ENCODE measurements at regions of chr4 and their contacts with region 1.

Region 1: GRCh38 chr4:54064295-54065111 is at the start of gene CHIC2:
- DNase-seq: peak; percentile 95 to 99 (median 97)
- ATAC-seq: peak; percentile 89
- H3K4me3 ChIP-seq: peak within 1 kb of the TSS; percentile 89
- H3K4me3 Mint-ChIP-seq: peak within 1 kb of the TSS; percentile 97
- H3K27ac ChIP-seq: peak within 1 kb of the TSS; percentile 88 to 99
- H3K27ac Mint-ChIP-seq: peak within 1 kb of the TSS; percentile 90
- H3K4me1 ChIP-seq: peaks cover 8% of the 10 kb centered on the region
- H3K4me1 Mint-ChIP-seq: peaks cover 55% of the 10 kb centered on the region
- H3K27me3 ChIP-seq: no peaks in the 10 kb centered on the region
- H3K27me3 Mint-ChIP-seq: no peaks in the 10 kb centered on the region
- CTCF ChIP-seq: no peak
- total RNA-seq, gene CHIC2: 53.8 to 59.2 TPM

Region 2: GRCh38 chr4:53365486-53366300 is 698.8 kb before region 1 on chr4 and contains the start of gene SCFD2:
- CTCF ChIA-PET with region 1: no interaction called
- POLR2A ChIA-PET with region 1: interaction called, 3 read pairs
- intact Hi-C with region 1: loop called in 1 of 2 experiments (anchors 5 kb)
- DNase-seq: peak; percentile 87 to 98 (median 95)
- ATAC-seq: peak; percentile 95
- H3K4me3 ChIP-seq: peak within 1 kb of the TSS; percentile 72
- H3K4me3 Mint-ChIP-seq: peak within 1 kb of the TSS; percentile 91
- H3K27ac ChIP-seq: peak within 1 kb of the TSS; percentile 75 to 77
- H3K27ac Mint-ChIP-seq: peak within 1 kb of the TSS; percentile 93
- H3K4me1 ChIP-seq: peaks cover 30% of the 10 kb centered on the region
- H3K4me1 Mint-ChIP-seq: peaks cover 55% of the 10 kb centered on the region
- H3K27me3 ChIP-seq: peaks cover 0 to 6% of the 10 kb centered on the region in 2 experiments
- H3K27me3 Mint-ChIP-seq: peaks cover 11% of the 10 kb centered on the region
- CTCF ChIP-seq: no peak
- total RNA-seq, gene SCFD2: 15.4 to 17.6 TPM

Region 3: GRCh38 chr4:53377319-53378170 is 687.0 kb before region 1 on chr4 and contains the start of gene FIP1L1:
- CTCF ChIA-PET with region 1: no interaction called
- POLR2A ChIA-PET with region 1: no interaction called
- intact Hi-C with region 1: loop called in 1 of 2 experiments (anchors 5 kb)
- DNase-seq: peak; percentile 90 to 99 (median 96)
- ATAC-seq: peak; percentile 95
- H3K4me3 ChIP-seq: peak within 1 kb of the TSS; percentile 92
- H3K4me3 Mint-ChIP-seq: peak within 1 kb of the TSS; percentile 99
- H3K27ac ChIP-seq: peak within 1 kb of the TSS; percentile 89 to 95
- H3K27ac Mint-ChIP-seq: peak within 1 kb of the TSS; percentile 97
- H3K4me1 ChIP-seq: peaks cover 6% of the 10 kb centered on the region
- H3K4me1 Mint-ChIP-seq: peaks cover 53% of the 10 kb centered on the region
- H3K27me3 ChIP-seq: no peaks in the 10 kb centered on the region
- H3K27me3 Mint-ChIP-seq: peaks cover 5% of the 10 kb centered on the region
- CTCF ChIP-seq: no peak
- total RNA-seq, gene FIP1L1: 50.9 to 53.1 TPM

Region 4: GRCh38 chr4:53734584-53735353 is 329.7 kb before region 1 on chr4:
- CTCF ChIA-PET with region 1: no interaction called
- POLR2A ChIA-PET with region 1: no interaction called
- intact Hi-C with region 1: no loop called
- DNase-seq: peak in 2 of 14 experiments; percentile 9 to 16
- ATAC-seq: no peak
- H3K4me3 ChIP-seq: no peak overlapping the region
- H3K4me3 Mint-ChIP-seq: no peak overlapping the region
- H3K27ac ChIP-seq: no peak overlapping the region
- H3K27ac Mint-ChIP-seq: no peak overlapping the region
- H3K4me1 ChIP-seq: no peaks in the 10 kb centered on the region
- H3K4me1 Mint-ChIP-seq: no peaks in the 10 kb centered on the region
- H3K27me3 ChIP-seq: no peaks in the 10 kb centered on the region
- H3K27me3 Mint-ChIP-seq: peaks cover 6% of the 10 kb centered on the region
- CTCF ChIP-seq: no peak

Region 5: DNA sequence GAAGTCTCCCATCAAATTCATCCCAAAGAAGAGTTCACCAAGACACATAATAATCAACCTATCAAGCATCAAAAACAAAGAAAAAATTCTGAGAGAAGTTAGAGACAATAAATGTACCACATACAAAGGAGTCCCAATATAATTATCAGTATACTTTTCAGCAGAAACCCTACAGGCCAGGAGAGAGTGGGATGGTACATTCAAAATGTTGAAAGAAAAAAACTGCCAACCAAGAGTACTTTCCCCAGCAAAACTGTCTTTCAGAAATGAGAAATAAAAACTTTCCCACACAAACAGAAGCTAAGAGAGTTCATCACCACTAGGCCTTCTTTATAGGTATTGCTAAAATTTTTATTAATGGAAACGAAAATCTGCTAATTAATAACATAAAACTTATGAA is 308.8 kb before region 1 on chr4:
- CTCF ChIA-PET with region 1: no interaction called
- POLR2A ChIA-PET with region 1: no interaction called
- intact Hi-C with region 1: no loop called
- DNase-seq: no peak
- ATAC-seq: no peak
- H3K4me3 ChIP-seq: no peak overlapping the region
- H3K4me3 Mint-ChIP-seq: no peak overlapping the region
- H3K27ac ChIP-seq: no peak overlapping the region
- H3K27ac Mint-ChIP-seq: no peak overlapping the region
- H3K4me1 ChIP-seq: no peaks in the 10 kb centered on the region
- H3K4me1 Mint-ChIP-seq: no peaks in the 10 kb centered on the region
- H3K27me3 ChIP-seq: no peaks in the 10 kb centered on the region
- H3K27me3 Mint-ChIP-seq: peaks cover 5% of the 10 kb centered on the region
- CTCF ChIP-seq: no peak

Region 6: DNA sequence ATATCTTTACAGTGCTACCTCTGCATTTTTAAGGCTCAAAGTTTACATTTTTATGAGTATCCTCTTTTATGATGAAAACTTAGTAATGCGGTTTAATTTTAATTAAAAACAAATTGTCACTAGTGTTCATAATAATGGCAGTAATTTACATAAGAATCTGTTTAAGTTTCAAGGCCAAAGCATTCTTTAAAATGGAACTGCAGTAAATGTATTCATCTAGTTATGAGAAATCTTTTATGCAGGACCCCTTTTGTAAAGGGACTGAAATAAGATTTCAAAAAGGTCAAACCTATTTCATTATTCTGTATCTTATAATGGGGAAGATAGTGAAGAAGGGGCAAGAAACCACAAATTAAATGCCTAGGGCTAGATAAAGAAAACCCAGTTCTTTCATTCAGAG is 37.2 kb before region 1 on chr4:
- CTCF ChIA-PET with region 1: no interaction called
- POLR2A ChIA-PET with region 1: no interaction called
- intact Hi-C with region 1: loop called in 1 of 2 experiments (anchors 5 kb)
- DNase-seq: no peak
- ATAC-seq: no peak
- H3K4me3 ChIP-seq: no peak overlapping the region
- H3K4me3 Mint-ChIP-seq: no peak overlapping the region
- H3K27ac ChIP-seq: no peak overlapping the region
- H3K27ac Mint-ChIP-seq: no peak overlapping the region
- H3K4me1 ChIP-seq: peaks cover 4% of the 10 kb centered on the region
- H3K4me1 Mint-ChIP-seq: peaks cover 35% of the 10 kb centered on the region
- H3K27me3 ChIP-seq: no peaks in the 10 kb centered on the region
- H3K27me3 Mint-ChIP-seq: no peaks in the 10 kb centered on the region
- CTCF ChIP-seq: no peak

Region 7: GRCh38 chr4:54091637-54092404 is 27.3 kb after region 1 on chr4:
- CTCF ChIA-PET with region 1: no interaction called
- POLR2A ChIA-PET with region 1: interaction called, 8 read pairs
- intact Hi-C with region 1: loop called (anchors 1 to 2 kb)
- DNase-seq: peak; percentile 66 to 93 (median 80)
- ATAC-seq: peak; percentile 93
- H3K4me3 ChIP-seq: peak overlapping the region; percentile 63
- H3K4me3 Mint-ChIP-seq: peak overlapping the region; percentile 88
- H3K27ac ChIP-seq: no peak overlapping the region
- H3K27ac Mint-ChIP-seq: no peak overlapping the region
- H3K4me1 ChIP-seq: peaks cover 30% of the 10 kb centered on the region
- H3K4me1 Mint-ChIP-seq: peaks cover 32% of the 10 kb centered on the region
- H3K27me3 ChIP-seq: peaks cover 49 to 53% of the 10 kb centered on the region in 2 experiments
- H3K27me3 Mint-ChIP-seq: peaks cover 62% of the 10 kb centered on the region
- CTCF ChIP-seq: no peak

Region 8: DNA sequence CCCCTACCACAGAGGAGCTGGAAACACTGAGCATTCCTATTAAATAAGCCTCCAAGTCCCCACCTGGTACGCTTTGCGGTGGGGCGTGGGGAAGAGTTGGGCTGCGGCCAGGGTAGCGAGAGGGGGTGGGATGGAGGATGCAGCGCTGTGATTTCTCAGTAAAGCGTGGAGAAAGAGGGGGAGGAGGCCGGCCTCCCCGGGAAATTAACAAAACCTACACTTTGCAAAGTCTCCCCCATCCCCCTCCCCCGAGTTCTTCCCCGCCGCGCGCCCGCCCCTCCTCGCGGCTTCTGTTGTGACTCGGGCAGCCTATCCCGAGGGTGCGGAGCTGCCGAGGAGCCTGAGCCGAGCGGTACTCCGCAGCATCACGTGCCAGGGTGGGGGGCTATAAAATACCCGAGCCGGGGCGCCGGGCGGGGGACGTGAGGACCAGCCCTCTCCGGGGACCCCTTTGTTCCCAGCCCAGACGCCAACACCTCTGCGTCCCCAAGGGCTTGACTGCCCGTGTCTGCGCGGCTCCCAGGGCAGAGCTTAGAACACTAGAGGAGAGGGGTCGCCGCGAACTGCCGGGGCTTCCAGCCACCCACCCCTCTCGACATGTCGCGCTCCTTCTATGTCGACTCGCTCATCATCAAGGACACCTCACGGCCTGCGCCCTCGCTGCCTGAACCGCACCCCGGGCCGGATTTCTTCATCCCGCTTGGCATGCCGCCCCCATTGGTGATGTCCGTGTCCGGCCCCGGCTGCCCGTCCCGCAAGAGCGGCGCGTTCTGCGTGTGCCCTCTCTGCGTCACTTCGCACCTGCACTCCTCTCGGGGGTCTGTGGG is 35.5 kb after region 1 on chr4 and contains the start of gene GSX2:
- CTCF ChIA-PET with region 1: no interaction called
- POLR2A ChIA-PET with region 1: interaction called, 10 read pairs
- intact Hi-C with region 1: no loop called
- DNase-seq: peak in 2 of 14 experiments; percentile 27 to 30
- ATAC-seq: peak; percentile 47
- H3K4me3 ChIP-seq: peak within 1 kb of the TSS; percentile 14
- H3K4me3 Mint-ChIP-seq: peak within 1 kb of the TSS; percentile 75
- H3K27ac ChIP-seq: no peak within 1 kb of the TSS
- H3K27ac Mint-ChIP-seq: no peak within 1 kb of the TSS
- H3K4me1 ChIP-seq: peaks cover 42% of the 10 kb centered on the region
- H3K4me1 Mint-ChIP-seq: peaks cover 58% of the 10 kb centered on the region
- H3K27me3 ChIP-seq: peaks cover 91 to 96% of the 10 kb centered on the region in 2 experiments
- H3K27me3 Mint-ChIP-seq: peaks cover 97% of the 10 kb centered on the region
- CTCF ChIP-seq: no peak
- total RNA-seq, gene GSX2: not detected

Region 9: GRCh38 chr4:55955710-55956109 is 1891.2 kb after region 1 on chr4:
- CTCF ChIA-PET with region 1: no interaction called
- POLR2A ChIA-PET with region 1: no interaction called
- intact Hi-C with region 1: loop called in 1 of 2 experiments (anchors 10 kb)
- DNase-seq: no peak
- ATAC-seq: no peak
- H3K4me3 ChIP-seq: no peak overlapping the region
- H3K4me3 Mint-ChIP-seq: no peak overlapping the region
- H3K27ac ChIP-seq: no peak overlapping the region
- H3K27ac Mint-ChIP-seq: no peak overlapping the region
- H3K4me1 ChIP-seq: no peaks in the 10 kb centered on the region
- H3K4me1 Mint-ChIP-seq: peaks cover 17% of the 10 kb centered on the region
- H3K27me3 ChIP-seq: no peaks in the 10 kb centered on the region
- H3K27me3 Mint-ChIP-seq: no peaks in the 10 kb centered on the region
- CTCF ChIP-seq: no peak

Measured in CD4-positive, alpha-beta T cell (primary cell).